Aorta (tissue), 5 donors: ENCODE measurements at regions of chr19 and their contacts with region 1.

Region 1: GRCh38 chr19:31974941-31975340 is 370.5 kb upstream of the ZNF507 start:
- DNase-seq: no peak
- ATAC-seq: no peak
- H3K4me3 ChIP-seq: no peak overlapping the region
- H3K27ac ChIP-seq: no peak overlapping the region
- H3K4me1 ChIP-seq: no peaks in the 10 kb centered on the region
- H3K27me3 ChIP-seq: no peaks in the 10 kb centered on the region

Region 2: GRCh38 chr19:31963746-31964145 is 11.2 kb before region 1 on chr19:
- intact Hi-C with region 1: loop called in 1 of 2 experiments (anchors 1 kb)
- DNase-seq: no peak
- ATAC-seq: no peak
- H3K4me3 ChIP-seq: no peak overlapping the region
- H3K27ac ChIP-seq: no peak overlapping the region
- H3K4me1 ChIP-seq: no peaks in the 10 kb centered on the region
- H3K27me3 ChIP-seq: no peaks in the 10 kb centered on the region